ENCODE measurements at regions of chr18 and their contacts with region 1.

Region 1: GRCh38 chr18:35374708-35375107 is 2.4 kb downstream of the ZNF396 start:
- DNase-seq: no peak
- ATAC-seq: no peak
- H3K4me3 ChIP-seq: no peak overlapping the region
- H3K4me3 Mint-ChIP-seq: no peak overlapping the region
- H3K27ac ChIP-seq: no peak overlapping the region
- H3K27ac Mint-ChIP-seq: no peak overlapping the region
- H3K4me1 ChIP-seq: peaks cover 14% of the 10 kb centered on the region
- H3K4me1 Mint-ChIP-seq: peaks cover 7% of the 10 kb centered on the region
- H3K27me3 ChIP-seq: no peaks in the 10 kb centered on the region
- H3K27me3 Mint-ChIP-seq: no peaks in the 10 kb centered on the region
- CTCF ChIP-seq: no peak

Region 2: DNA sequence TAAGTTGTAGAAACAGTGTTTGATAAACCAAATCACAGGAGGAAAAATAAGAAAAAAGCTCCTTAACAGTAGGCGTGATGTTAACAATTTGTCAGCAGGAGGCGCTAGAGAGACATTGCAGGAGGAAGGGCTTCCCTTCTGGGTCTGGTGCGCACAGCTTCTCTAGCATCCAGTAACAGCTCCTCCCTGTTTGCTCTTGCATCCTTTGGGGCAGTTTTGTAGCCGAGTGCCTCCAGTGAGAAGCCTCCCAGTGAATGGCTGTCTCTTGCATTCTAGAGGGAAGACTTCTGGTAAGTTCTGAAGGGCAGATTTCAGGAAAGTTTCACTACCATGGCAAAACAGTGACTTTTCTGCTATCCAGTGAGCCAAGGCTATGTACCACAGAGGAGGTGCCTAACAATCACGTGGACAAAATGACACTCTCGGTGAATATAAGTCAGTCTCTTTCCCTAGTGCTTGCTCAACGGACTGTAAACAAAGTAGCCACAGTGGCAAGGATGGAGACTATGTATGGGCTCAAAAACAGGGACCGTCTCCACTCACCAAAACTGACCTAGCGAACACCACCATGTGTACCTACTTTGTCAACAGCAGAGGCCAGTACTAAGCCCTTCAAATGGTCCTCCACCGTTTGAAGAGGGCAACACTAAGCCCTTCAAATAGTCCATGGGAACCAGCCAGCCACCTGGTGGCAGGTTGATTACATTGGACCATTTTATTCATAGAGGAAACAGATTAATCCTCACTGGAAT is 12.1 kb after region 1 on chr18:
- CTCF ChIA-PET with region 1: interaction called, 10 read pairs
- POLR2A ChIA-PET with region 1: no interaction called
- intact Hi-C with region 1: no loop called
- DNase-seq: peak; percentile 29 to 89 (median 52)
- ATAC-seq: peak; percentile 99
- H3K4me3 ChIP-seq: no peak overlapping the region
- H3K4me3 Mint-ChIP-seq: no peak overlapping the region
- H3K27ac ChIP-seq: no peak overlapping the region
- H3K27ac Mint-ChIP-seq: no peak overlapping the region
- H3K4me1 ChIP-seq: peaks cover 5% of the 10 kb centered on the region
- H3K4me1 Mint-ChIP-seq: peaks cover 7% of the 10 kb centered on the region
- H3K27me3 ChIP-seq: peaks cover 0 to 4% of the 10 kb centered on the region in 2 experiments
- H3K27me3 Mint-ChIP-seq: peaks cover 23% of the 10 kb centered on the region
- CTCF ChIP-seq: peak; percentile 95

Region 3: GRCh38 chr18:35422237-35422636 is 47.5 kb after region 1 on chr18:
- CTCF ChIA-PET with region 1: no interaction called
- POLR2A ChIA-PET with region 1: no interaction called
- intact Hi-C with region 1: no loop called
- DNase-seq: no peak
- ATAC-seq: no peak
- H3K4me3 ChIP-seq: no peak overlapping the region
- H3K4me3 Mint-ChIP-seq: no peak overlapping the region
- H3K27ac ChIP-seq: no peak overlapping the region
- H3K27ac Mint-ChIP-seq: no peak overlapping the region
- H3K4me1 ChIP-seq: no peaks in the 10 kb centered on the region
- H3K4me1 Mint-ChIP-seq: no peaks in the 10 kb centered on the region
- H3K27me3 ChIP-seq: no peaks in the 10 kb centered on the region
- H3K27me3 Mint-ChIP-seq: no peaks in the 10 kb centered on the region
- CTCF ChIP-seq: no peak

Measured in CD4-positive, alpha-beta T cell (primary cell).